ENCODE measurements at regions of chr6 and their contacts with region 1.

Region 1: GRCh38 chr6:28335564-28336283 is at the start of gene ZSCAN31:
- DNase-seq: peak; percentile 96
- total RNA-seq, gene ZSCAN31: 7.1 TPM

Region 2: GRCh38 chr6:27388293-27389197 is 947.2 kb before region 1 on chr6 and contains the start of gene ZNF391:
- intact Hi-C with region 1: loop called (anchors 10 kb)
- DNase-seq: peak; percentile 89
- total RNA-seq, gene ZNF391: 0.62 TPM

Region 3: DNA sequence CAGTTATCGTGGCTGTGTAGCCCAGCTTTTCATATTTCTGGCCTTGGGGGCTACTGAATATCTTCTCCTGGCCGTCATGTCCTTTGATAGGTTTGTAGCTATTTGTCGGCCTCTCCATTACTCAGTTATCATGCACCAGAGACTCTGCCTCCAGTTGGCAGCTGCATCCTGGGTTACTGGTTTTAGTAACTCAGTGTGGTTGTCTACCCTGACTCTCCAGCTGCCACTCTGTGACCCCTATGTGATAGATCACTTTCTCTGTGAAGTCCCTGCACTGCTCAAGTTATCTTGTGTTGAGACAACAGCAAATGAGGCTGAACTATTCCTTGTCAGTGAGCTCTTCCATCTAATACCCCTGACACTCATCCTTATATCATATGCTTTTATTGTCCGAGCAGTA is 378.2 kb before region 1 on chr6:
- intact Hi-C with region 1: no loop called
- DNase-seq: no peak

Region 4: DNA sequence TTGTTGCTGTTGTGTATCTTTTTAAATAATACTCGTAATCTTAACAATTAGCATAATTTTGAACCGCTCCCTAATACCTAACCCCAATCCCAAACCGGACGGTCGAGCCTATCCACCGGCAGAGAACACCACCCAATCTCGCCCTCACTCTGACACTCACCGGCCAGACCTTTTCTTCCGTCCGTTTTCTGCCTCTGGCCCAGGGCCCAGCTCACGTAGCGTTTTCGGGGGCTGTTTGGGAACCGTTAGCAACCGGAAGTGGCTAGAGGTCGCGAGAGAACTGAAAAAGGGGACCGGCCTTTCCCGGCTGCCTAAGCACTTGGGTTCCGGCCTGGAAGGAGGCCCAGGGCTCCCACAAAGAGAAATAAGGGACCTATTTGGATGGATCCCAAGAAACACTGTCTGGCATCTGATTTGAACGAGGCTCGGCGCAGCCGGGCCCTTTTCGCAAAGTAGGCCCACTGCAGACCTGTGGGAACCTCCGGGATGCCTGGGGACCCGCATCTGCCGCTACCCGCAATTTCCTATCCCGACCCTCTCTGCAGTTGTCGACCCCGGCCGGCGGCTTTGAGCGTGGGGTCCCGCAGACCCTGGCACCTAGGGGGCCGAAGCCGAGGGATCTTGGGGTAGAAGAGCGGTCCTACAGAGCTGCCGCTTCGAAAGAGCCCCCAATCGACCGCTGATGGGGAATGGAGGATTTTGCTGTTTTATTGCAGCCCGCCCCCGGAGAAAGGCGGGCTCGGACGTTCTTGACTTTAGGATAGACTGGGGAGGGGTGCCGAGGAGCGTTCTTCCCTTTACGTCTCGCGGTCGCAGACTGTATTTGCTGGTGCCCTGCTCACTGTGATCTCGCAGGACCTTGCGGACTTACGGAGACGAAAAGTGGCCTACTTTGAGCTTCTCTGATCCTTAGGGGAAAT is 198.9 kb before region 1 on chr6:
- intact Hi-C with region 1: loop called (anchors 5 kb)
- DNase-seq: peak; percentile 92

Region 5: DNA sequence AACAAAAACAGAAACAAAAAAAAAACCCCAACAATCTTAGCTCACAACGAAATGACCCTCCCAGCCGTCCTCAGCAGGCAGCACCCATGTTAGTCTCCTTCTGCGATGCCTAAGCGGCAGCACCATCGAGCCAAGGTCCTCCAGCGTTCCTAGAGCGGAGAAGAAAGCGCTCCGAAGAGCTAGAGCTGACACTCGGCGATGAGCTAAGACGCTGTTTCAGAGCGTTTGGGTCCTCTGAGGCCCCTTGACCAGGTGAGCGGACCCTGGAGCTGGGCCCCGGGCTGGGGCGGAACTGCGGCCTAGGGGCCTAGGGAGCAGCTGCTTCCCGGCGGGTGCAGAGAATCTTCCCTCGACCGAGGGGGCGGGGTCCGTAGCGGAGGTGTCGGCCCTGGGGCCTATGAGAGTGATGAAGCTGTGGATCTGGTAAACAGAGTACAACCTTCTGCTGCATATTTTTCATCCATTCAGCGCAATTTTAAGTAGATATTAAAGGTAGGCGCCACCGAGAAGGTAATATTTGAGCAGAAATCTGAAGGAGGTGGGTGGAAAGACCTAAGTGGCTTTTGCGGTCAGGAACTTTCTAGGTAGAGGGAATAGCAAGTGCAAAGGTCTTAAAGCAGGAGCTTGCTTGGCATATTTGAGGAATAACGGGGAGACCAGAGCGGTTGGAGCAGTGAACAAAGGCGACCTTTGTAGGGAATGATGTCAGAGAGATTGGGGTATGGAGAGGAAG is 68.6 kb before region 1 on chr6 and contains the start of gene ZSCAN26:
- intact Hi-C with region 1: loop called (anchors 5 kb)
- DNase-seq: peak; percentile 89
- total RNA-seq, gene ZSCAN26: 13.4 TPM

Region 6: DNA sequence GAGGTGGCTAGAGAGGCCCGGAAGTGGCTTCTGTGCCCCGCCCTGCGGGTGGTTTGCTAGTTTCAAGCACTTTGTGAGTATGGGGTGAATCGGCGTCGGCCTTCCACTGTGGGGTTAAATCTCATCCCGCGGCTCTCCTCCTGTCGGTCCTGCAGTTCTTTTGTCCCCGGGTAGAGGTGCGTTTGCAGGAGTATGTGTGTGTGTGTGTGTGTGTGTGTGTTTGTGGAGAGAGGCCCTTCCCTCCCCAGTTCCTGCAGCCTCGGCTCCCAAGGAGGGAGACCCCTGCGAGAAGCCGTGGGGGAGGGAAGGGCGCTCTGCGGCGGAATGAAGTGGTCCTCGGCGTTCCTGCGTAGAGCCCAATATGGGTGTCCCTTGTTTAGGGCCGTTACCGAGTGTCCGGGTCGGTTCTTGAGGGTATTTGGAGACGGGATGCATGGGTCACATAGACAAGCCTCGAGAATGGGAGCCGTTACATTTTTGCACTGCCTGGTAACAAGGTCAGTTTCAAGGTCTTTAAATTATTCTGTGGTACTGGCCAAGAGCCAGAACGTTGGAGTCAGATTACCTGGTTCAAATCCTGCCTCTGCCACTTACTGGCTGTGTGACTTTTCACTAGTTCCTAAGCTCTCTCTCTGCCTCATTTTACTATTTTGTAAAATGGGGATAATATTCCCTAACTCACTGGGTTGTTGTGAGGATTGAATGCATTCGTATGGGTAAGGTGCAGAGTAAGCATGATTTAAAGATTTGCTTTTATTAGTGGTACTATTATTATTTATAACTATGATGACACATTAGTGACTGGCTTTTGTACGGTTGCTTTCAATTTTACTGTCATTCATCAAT is 14.4 kb after region 1 on chr6 and contains the start of gene ZKSCAN3:
- intact Hi-C with region 1: loop called (anchors 2 kb)
- DNase-seq: peak; percentile 96
- total RNA-seq, gene ZKSCAN3: 5.3 TPM

Region 7: DNA sequence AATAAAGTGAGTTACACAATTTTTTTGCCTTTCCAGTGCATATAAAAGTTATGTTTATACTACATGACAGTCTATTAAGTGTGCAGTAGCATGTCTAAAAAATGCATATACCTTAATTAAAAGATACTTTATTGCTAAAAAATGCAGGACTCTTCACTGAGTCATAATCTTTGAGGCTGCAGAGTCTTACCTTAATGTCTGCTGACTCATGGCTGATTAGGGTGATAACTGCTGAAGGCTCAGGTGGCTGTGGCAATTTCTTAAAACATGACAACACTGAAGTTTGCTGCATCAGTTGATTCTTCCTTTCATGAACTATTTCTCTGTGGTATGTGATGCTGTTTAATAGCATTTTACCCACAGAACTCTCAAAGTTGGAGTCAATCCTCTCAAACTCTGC is 88.4 kb after region 1 on chr6:
- intact Hi-C with region 1: no loop called
- DNase-seq: no peak

Region 8: DNA sequence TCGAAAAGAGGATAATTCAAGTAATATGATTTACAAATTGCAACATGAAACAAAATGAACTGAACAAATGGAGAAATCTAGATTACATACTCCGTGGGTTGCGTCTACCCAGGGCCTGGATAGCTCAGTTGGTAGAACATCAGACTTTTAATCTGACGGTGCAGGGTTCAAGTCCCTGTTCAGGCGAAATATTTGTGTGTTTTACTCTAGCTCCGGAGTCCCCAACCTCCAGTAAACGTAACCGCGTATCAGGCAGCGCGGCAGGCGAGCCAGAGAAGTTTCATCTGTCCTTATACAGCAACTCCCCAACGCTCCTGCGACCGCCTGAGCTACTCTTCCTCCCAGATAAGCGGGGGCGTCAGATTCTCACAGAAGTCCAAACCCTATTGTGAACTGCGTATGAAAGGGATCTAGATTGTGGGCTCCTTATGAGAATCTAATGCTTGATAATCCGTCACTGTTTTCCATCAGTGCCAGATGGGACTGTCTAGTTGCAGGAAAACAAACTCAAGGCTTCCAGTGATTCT is 412.0 kb after region 1 on chr6:
- intact Hi-C with region 1: no loop called
- DNase-seq: no peak

Region 9: DNA sequence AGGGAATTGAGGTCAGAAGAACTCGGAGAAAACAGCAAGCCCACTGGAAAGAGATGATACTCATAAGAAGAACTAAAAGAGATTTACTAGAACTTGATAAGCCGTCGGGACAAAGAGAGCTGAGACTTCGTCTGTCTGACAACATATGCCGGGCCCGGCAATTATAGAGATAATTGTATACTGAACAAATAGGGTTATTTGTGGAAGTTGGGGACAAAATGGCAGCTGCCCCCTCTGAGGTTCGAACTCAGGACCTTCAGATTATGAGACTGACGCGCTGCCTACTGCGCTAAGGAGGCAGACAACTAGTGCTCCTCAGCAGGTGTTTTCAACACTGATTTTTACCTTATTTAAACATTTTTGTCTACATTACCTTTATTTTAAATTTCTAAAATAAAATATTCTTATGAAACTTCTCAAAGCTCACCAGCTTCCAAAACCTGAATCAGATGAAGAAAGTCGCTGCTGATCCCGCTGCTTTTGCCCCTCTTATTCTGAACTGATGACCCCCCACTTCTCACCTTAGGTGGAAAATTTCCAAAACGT is 617.4 kb after region 1 on chr6:
- intact Hi-C with region 1: no loop called
- DNase-seq: no peak